Activated B cell treated with CpG ODN at 0.5 μM for 24 hours (primary cell): ENCODE measurements at regions of chr9 and their contacts with region 1.

Region 1: GRCh38 chr9:93566408-93567270 is 9.7 kb upstream of the PHF2 start:
- DNase-seq: peak; percentile 100
- ATAC-seq: peak; percentile 98
- H3K4me3 Mint-ChIP-seq: peak overlapping the region; percentile 86
- H3K27ac Mint-ChIP-seq: peak overlapping the region; percentile 92
- H3K4me1 Mint-ChIP-seq: peaks cover 33% of the 10 kb centered on the region
- H3K27me3 Mint-ChIP-seq: no peaks in the 10 kb centered on the region
- CTCF ChIP-seq: peak; percentile 37

Region 2: DNA sequence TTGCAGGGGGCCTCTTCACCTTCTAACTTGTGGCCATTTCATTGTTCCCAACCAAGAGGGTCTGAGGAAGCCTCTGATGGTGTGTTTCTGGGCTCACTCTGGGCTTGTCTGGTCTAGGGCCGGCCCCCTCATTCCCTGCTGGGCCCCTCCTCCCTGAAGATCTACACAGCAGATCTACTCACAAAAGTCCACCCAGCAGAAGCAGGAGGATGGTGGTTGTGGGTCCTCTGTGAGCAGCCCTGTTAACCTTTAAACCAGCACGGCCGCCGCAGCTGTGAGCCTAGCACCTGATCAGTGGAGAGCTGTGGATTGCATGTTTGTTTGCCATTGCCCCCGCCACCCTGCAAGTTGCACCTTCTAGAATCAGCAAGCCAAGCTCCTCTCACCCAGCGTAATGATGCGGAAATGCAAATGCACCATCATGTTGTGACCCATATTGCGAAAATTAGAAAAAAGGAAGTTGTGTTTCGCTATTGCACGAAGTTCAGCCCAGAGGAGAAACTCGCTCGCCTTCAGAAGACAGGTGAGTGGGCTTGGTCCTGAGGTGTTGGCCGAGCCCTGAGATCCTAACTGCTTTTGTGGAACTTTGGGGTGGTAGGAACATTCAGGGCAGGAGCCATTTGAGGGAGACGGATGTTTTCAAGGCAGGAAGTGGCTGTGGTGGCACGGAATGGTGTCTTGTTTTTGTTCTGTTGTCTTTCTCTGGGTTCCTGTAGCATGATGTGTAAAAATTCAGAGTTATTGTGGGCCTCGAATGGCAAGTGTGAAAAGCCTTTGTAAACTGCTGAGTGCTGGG is 602.6 kb before region 1 on chr9:
- CTCF ChIA-PET with region 1: no interaction called
- POLR2A ChIA-PET with region 1: interaction called, 3 read pairs
- intact Hi-C with region 1: loop called (anchors 1 kb)
- DNase-seq: peak; percentile 56
- ATAC-seq: peak; percentile 82
- H3K4me3 Mint-ChIP-seq: peak overlapping the region; percentile 94
- H3K27ac Mint-ChIP-seq: peak overlapping the region; percentile 99
- H3K4me1 Mint-ChIP-seq: peaks cover 69% of the 10 kb centered on the region
- H3K27me3 Mint-ChIP-seq: no peaks in the 10 kb centered on the region
- CTCF ChIP-seq: no peak

Region 3: DNA sequence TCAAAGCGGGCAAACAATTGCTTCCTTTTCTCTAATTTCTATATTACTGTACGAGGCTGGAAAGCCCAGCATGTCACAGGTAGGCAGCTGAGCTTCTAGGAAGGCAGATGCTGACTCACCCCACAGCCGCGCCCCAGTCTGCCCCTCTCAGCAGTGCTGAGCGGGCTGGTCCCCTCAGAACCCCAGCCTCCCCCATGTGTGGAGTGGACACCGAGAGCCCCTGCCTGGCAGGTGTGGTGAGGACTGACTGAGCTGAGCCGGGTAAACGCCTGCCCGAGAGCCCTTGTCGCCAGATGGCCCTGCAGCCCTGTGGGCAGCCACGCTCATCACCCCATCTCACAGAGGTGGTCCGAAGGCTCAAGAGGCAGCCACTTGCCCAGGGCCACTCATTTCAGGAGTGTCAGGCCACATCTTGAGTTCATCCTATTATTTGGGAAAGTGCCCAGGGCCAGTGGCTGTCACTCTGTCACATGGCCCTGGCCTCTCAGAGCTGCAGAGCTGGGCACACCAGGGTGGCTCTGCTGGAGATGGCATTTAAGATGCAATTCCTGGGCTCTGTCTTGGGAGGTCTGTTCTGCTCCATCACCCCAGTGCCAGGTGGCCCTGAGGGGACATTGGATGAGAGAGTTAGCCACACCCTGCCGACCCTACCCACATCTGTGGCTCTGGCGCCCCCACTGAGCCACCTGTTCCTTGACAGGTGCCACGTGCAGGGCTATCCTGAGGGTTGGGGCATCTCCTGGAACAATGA is 458.2 kb before region 1 on chr9:
- CTCF ChIA-PET with region 1: interaction called, 12 read pairs
- POLR2A ChIA-PET with region 1: interaction called, 4 read pairs
- intact Hi-C with region 1: loop called (anchors 1 kb)
- DNase-seq: no peak
- ATAC-seq: peak; percentile 56
- H3K4me3 Mint-ChIP-seq: no peak overlapping the region
- H3K27ac Mint-ChIP-seq: no peak overlapping the region
- H3K4me1 Mint-ChIP-seq: peaks cover 28% of the 10 kb centered on the region
- H3K27me3 Mint-ChIP-seq: no peaks in the 10 kb centered on the region
- CTCF ChIP-seq: no peak

Region 4: GRCh38 chr9:93159601-93160471 is 406.8 kb before region 1 on chr9:
- CTCF ChIA-PET with region 1: no interaction called
- POLR2A ChIA-PET with region 1: no interaction called
- intact Hi-C with region 1: loop called (anchors 1 kb)
- DNase-seq: peak; percentile 70
- ATAC-seq: peak; percentile 98
- H3K4me3 Mint-ChIP-seq: no peak overlapping the region
- H3K27ac Mint-ChIP-seq: no peak overlapping the region
- H3K4me1 Mint-ChIP-seq: peaks cover 7% of the 10 kb centered on the region
- H3K27me3 Mint-ChIP-seq: no peaks in the 10 kb centered on the region
- CTCF ChIP-seq: peak; percentile 88

Region 5: GRCh38 chr9:93453047-93453914 is 113.4 kb before region 1 on chr9 and contains the start of gene FAM120AOS:
- CTCF ChIA-PET with region 1: interaction called, 6 read pairs
- POLR2A ChIA-PET with region 1: interaction called, 38 read pairs
- intact Hi-C with region 1: loop called (anchors 1 kb)
- DNase-seq: peak; percentile 68
- ATAC-seq: peak; percentile 74
- H3K4me3 Mint-ChIP-seq: peak within 1 kb of the TSS; percentile 96
- H3K27ac Mint-ChIP-seq: peak within 1 kb of the TSS; percentile 97
- H3K4me1 Mint-ChIP-seq: peaks cover 56% of the 10 kb centered on the region
- H3K27me3 Mint-ChIP-seq: no peaks in the 10 kb centered on the region
- CTCF ChIP-seq: no peak
- total RNA-seq, gene FAM120AOS: 35.8 and 39.0 TPM in 2 replicates

Region 6: GRCh38 chr9:93480728-93481324 is 85.8 kb before region 1 on chr9:
- CTCF ChIA-PET with region 1: no interaction called
- POLR2A ChIA-PET with region 1: no interaction called
- intact Hi-C with region 1: no loop called
- DNase-seq: no peak
- ATAC-seq: no peak
- H3K4me3 Mint-ChIP-seq: no peak overlapping the region
- H3K27ac Mint-ChIP-seq: no peak overlapping the region
- H3K4me1 Mint-ChIP-seq: no peaks in the 10 kb centered on the region
- H3K27me3 Mint-ChIP-seq: no peaks in the 10 kb centered on the region
- CTCF ChIP-seq: no peak

Region 7: DNA sequence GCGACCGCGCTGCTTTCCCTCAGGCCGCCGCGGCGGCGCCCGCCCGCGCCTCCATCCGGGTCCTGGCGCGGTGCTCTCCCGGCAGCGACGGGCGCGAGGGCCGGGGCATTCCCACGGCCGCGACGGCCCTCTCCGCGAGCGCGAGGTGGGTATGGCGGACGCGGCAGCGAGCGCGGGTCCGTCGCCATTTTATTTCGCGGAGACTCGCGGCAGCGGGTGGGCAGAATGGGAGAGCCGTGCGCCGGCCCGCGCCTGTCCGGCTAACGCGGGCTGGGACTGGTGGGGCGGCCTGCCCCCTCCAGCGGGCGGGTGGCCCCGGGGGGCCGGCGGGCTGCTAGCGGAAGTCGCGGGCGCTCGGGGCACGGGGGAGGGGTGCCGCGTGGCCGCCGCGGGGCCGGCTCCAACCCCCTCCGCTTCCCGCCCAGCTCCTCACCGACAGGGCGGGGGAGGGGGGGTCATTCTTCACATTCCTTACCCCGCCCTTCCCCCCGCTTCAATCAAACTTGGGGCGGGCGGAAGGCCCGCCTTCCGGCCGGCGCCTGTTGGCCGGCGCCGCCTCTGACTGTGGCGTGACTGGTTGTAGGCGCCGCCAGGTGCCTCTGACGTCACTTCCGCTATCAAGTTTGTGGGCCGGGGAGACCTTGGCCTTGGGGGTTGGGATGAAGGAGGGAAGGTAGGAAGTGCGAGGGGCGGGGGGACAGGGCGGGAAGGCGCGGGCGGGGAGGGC is 599.8 kb after region 1 on chr9:
- CTCF ChIA-PET with region 1: no interaction called
- POLR2A ChIA-PET with region 1: interaction called, 4 read pairs
- intact Hi-C with region 1: loop called (anchors 1 kb)
- DNase-seq: peak; percentile 85
- ATAC-seq: peak; percentile 63
- H3K4me3 Mint-ChIP-seq: peak overlapping the region; percentile 89
- H3K27ac Mint-ChIP-seq: peak overlapping the region; percentile 87
- H3K4me1 Mint-ChIP-seq: peaks cover 49% of the 10 kb centered on the region
- H3K27me3 Mint-ChIP-seq: no peaks in the 10 kb centered on the region
- CTCF ChIP-seq: no peak